Lower leg skin (tissue), 4 donors: ENCODE measurements at regions of chr7 and their contacts with region 1.

Region 1: GRCh38 chr7:109836016-109836415 is 1254.9 kb upstream of the LRRN3 start:
- DNase-seq: no peak
- H3K4me3 ChIP-seq: no peak overlapping the region
- CTCF ChIP-seq: no peak
- POLR2A ChIP-seq: no peak

Region 2: GRCh38 chr7:107846324-107846723 is 1989.7 kb before region 1 on chr7:
- intact Hi-C with region 1: no loop called
- DNase-seq: no peak
- H3K4me3 ChIP-seq: no peak overlapping the region
- CTCF ChIP-seq: no peak
- POLR2A ChIP-seq: no peak

Region 3: GRCh38 chr7:111210996-111211395 is 1375.0 kb after region 1 on chr7:
- intact Hi-C with region 1: loop called (anchors 5 kb)
- DNase-seq: no peak
- H3K4me3 ChIP-seq: no peak overlapping the region
- CTCF ChIP-seq: no peak
- POLR2A ChIP-seq: no peak